Activated CD4-positive, alpha-beta T cell treated with anti-CD3 and anti-CD28 coated beads, Interleukin-2, amount 10 ng/mL, durations not matched to agents 24 days and 14 days (primary cell): ENCODE measurements at regions of chr2 and their contacts with region 1.

Region 1: GRCh38 chr2:64101141-64101591 is 43.1 kb downstream of the PELI1 start:
- DNase-seq: no peak
- H3K4me3 Mint-ChIP-seq: peak overlapping the region; percentile 18
- H3K27ac Mint-ChIP-seq: peak overlapping the region; percentile 85
- H3K4me1 Mint-ChIP-seq: peaks cover 37% of the 10 kb centered on the region
- H3K27me3 Mint-ChIP-seq: no peaks in the 10 kb centered on the region

Region 2: DNA sequence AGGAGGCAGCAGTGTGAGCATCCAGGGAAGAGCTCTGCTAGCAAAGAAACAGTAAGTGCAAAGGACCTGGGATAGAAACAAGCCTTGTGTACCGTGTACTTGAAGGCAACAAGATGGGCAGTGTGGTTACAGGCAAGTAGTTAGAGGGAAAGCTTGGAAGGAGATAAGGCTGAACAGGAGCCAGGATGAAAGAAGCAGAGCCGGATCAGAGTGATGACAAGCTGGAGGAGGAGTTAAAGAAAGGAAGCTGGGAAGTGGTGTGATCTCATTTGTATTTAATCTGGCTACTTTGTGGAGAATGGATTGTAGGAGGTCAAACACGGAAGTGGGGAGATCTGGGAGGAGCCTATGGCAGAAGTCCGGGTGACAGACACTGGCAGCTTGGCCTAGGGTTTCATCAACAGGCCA is 37.2 kb before region 1 on chr2:
- intact Hi-C with region 1: loop called (anchors 2 kb)
- DNase-seq: no peak
- H3K4me3 Mint-ChIP-seq: no peak overlapping the region
- H3K27ac Mint-ChIP-seq: peak overlapping the region; percentile 43
- H3K4me1 Mint-ChIP-seq: peaks cover 26% of the 10 kb centered on the region
- H3K27me3 Mint-ChIP-seq: no peaks in the 10 kb centered on the region

Region 3: GRCh38 chr2:64133828-64134227 is 32.7 kb after region 1 on chr2:
- intact Hi-C with region 1: loop called (anchors 1 kb)
- DNase-seq: no peak
- H3K4me3 Mint-ChIP-seq: peak overlapping the region; percentile 60
- H3K27ac Mint-ChIP-seq: peak overlapping the region; percentile 89
- H3K4me1 Mint-ChIP-seq: peaks cover 72% of the 10 kb centered on the region
- H3K27me3 Mint-ChIP-seq: no peaks in the 10 kb centered on the region

Region 4: DNA sequence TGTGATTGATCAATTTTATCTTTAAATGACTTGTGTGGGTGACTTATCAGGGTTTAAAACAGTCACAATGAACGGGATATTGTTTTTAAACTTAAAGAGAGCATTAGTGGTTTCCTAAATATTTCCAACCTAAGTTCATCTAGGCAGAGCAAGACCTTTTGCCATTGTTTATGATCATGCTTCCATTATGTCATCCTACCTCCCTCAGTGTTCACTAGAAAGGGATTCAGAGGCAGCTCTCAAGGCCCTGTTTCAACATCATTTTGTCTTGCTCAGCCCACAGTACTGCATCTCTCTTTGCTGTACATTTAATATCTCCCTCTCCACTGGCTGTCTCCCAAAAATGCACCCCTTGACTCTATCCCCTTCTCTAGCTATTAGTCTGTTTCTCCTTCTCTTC is 64.5 kb after region 1 on chr2:
- intact Hi-C with region 1: loop called (anchors 1 kb)
- DNase-seq: no peak
- H3K4me3 Mint-ChIP-seq: no peak overlapping the region
- H3K27ac Mint-ChIP-seq: no peak overlapping the region
- H3K4me1 Mint-ChIP-seq: peaks cover 3% of the 10 kb centered on the region
- H3K27me3 Mint-ChIP-seq: no peaks in the 10 kb centered on the region

Region 5: GRCh38 chr2:64295326-64296139 is 194.4 kb after region 1 on chr2:
- intact Hi-C with region 1: loop called (anchors 1 kb)
- DNase-seq: no peak
- H3K4me3 Mint-ChIP-seq: peak overlapping the region; percentile 33
- H3K27ac Mint-ChIP-seq: peak overlapping the region; percentile 82
- H3K4me1 Mint-ChIP-seq: peaks cover 19% of the 10 kb centered on the region
- H3K27me3 Mint-ChIP-seq: peaks cover 19% of the 10 kb centered on the region